ENCODE measurements at regions of chr11 and their contacts with region 1.

Region 1: GRCh38 chr11:44899959-44900358 is 50.7 kb downstream of the TP53I11 start:
- DNase-seq: no peak
- CTCF ChIP-seq: no peak

Region 2: DNA sequence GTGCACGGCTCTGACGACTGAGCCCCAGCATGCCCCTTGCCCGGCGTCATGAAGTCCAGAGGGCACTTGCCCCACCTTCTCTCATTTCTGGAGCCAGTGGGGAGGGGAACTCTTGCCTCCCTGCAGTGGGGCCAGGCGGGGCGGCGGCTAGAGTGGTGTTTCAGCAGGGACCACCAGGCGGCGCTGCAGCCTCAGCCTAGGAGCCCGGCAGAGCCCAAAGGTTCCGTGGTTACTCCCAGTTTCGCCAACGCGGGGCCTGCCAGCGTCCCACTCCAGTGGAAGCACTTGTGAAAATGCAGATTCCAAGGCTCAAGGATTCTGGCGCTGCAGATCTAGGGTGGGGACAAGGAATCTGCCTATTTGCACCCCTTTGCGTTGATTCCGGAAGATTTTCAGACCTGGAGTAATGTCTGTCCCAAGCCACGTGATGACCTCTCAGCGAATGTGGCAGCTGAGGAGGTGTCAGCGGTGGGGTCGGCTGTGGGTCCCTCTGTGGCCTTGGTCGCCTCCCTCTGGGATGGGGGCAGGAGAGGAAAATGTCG is 278.7 kb before region 1 on chr11:
- in situ Hi-C with region 1: loop called (anchors 10 kb)
- DNase-seq: peak; percentile 71
- CTCF ChIP-seq: peak; percentile 90

Measured in GM13977 (cell line).